Breast epithelium (tissue), 4 donors: ENCODE measurements at regions of chr3 and their contacts with region 1.

Region 1: DNA sequence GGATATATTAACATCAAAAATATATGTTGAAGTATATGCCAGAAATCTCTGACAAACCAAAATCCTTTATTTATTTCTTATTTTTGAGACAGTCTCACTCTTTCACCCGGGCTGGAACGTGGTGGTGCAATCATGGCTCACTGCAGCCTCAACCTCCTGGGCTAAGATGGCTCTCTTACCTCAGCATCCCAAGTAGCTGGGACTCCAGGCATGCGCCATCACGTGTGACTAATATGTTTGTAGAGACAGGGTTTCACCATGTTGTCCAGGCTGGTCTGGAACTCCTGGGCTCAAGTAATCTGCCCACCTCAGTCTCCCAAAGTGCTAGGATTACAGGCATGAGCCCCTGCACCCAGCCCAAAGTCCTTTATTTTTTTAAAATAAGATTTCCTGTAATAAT is 11.9 kb downstream of the FAIM start:
- DNase-seq: no peak
- H3K4me3 ChIP-seq: no peak overlapping the region
- H3K27ac ChIP-seq: no peak overlapping the region
- H3K4me1 ChIP-seq: no peaks in the 10 kb centered on the region
- H3K27me3 ChIP-seq: no peaks in the 10 kb centered on the region
- CTCF ChIP-seq: no peak
- POLR2A ChIP-seq: no peak

Region 2: DNA sequence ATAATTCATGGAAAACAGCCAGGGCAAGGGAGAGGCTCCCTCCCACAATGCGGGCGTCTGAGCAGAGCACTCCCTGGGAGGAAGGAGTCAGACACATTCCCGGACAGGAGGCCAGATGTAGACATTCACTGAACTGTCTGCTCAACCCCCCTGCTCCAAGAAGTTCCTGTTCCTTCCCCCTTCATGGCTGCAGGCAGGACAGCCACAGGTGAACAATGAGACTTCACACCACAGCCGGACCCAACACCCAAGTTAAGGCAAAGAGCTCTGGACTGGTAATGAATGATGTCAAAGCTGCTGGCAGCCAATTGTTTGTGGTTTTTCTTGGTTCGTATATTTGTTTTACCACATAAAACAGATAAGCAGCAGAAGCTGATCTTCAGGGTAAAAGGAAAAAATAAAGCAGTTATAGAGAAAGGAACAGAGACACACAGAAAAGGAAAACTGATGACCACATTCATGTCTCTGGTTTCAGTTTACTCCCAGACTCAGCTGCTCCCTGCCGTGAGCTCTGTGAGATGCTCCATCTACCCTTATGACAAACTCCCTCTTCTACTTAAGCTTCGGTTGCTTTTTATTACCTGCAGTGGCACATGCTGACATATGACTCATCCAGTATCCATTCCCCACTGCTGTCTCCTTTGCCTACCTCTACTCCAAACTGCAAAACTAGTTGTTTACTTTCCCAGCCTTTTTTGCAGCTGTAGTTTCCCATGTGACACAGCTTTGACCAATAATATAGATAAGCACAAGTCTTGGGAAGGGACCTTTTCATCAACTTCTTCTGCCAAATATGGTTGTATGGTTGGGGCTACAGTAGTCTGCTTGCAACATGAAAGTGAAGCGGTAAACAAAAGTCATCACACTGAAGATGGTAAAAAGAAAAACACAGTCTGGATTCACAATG is 538.1 kb before region 1 on chr3:
- intact Hi-C with region 1: loop called (anchors 5 kb)
- DNase-seq: no peak
- H3K4me3 ChIP-seq: peak overlapping the region in 1 of 3 donors; percentile 12
- H3K27ac ChIP-seq: peak overlapping the region in 1 of 2 donors; percentile 27
- H3K4me1 ChIP-seq: no peaks in the 10 kb centered on the region
- H3K27me3 ChIP-seq: no peaks in the 10 kb centered on the region
- CTCF ChIP-seq: no peak
- POLR2A ChIP-seq: no peak

Region 3: DNA sequence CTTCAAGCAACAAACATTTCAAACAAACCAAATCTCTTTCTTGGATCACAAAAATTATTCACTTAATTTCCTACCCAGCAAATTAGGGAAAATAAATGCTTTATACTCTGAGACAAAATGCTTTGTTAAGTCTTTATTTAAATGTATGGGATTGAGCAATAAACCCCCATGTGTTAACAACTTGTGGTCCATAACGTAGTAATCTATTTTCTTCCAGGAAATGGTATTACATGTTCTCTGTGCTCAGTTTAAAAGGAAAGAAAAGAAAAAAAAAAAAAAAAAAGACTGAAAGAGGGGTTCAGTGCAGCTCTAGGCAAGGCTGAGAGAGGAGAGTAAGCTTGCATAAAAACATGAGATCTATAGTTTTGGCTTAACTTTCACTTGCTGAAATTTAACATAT is 112.0 kb after region 1 on chr3:
- intact Hi-C with region 1: no loop called
- DNase-seq: no peak
- H3K4me3 ChIP-seq: no peak overlapping the region
- H3K27ac ChIP-seq: no peak overlapping the region
- H3K4me1 ChIP-seq: no peaks in the 10 kb centered on the region
- H3K27me3 ChIP-seq: no peaks in the 10 kb centered on the region
- CTCF ChIP-seq: no peak
- POLR2A ChIP-seq: no peak

Region 4: DNA sequence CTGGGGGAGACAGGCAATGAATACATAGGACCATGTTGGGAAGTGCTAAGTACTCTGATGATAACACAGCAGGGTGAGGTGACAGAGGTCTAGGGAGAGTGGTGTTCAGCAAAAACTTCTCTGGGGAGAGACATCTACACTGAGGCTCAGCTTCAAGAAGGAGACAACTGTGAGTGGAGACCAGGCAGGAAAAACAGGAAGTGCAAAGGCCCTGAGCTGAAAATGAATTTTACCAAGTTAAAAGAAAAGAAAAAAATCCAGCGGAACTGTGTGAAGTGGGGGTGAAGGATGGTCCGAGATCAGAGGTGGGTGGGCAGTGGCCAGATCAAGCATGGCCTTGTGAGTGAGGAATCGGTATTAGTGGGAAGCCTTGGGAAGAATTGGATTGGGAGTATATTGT is 1204.4 kb after region 1 on chr3:
- intact Hi-C with region 1: no loop called
- DNase-seq: no peak
- H3K4me3 ChIP-seq: no peak overlapping the region
- H3K27ac ChIP-seq: no peak overlapping the region
- H3K4me1 ChIP-seq: no peaks in the 10 kb centered on the region
- H3K27me3 ChIP-seq: no peaks in the 10 kb centered on the region
- CTCF ChIP-seq: no peak
- POLR2A ChIP-seq: no peak